ENCODE measurements at regions of chr1 and their contacts with region 1.

Region 1: GRCh38 chr1:110338886-110339406 is at the start of gene RBM15:
- DNase-seq: peak; percentile 100
- H3K4me3 ChIP-seq: peak within 1 kb of the TSS; percentile 67 to 95 (median 77)
- H3K27ac ChIP-seq: peak within 1 kb of the TSS; percentile 95 to 98 (median 97)
- H3K4me1 ChIP-seq: peaks cover 0 to 52% (median 52%) of the 10 kb centered on the region in 4 donors
- H3K27me3 ChIP-seq: no peaks in the 10 kb centered on the region
- CTCF ChIP-seq: no peak
- EP300 ChIP-seq: no peak
- POLR2A ChIP-seq: no peak
- total RNA-seq, gene RBM15: 23.2 to 32.1 (median 25.5) TPM

Region 2: DNA sequence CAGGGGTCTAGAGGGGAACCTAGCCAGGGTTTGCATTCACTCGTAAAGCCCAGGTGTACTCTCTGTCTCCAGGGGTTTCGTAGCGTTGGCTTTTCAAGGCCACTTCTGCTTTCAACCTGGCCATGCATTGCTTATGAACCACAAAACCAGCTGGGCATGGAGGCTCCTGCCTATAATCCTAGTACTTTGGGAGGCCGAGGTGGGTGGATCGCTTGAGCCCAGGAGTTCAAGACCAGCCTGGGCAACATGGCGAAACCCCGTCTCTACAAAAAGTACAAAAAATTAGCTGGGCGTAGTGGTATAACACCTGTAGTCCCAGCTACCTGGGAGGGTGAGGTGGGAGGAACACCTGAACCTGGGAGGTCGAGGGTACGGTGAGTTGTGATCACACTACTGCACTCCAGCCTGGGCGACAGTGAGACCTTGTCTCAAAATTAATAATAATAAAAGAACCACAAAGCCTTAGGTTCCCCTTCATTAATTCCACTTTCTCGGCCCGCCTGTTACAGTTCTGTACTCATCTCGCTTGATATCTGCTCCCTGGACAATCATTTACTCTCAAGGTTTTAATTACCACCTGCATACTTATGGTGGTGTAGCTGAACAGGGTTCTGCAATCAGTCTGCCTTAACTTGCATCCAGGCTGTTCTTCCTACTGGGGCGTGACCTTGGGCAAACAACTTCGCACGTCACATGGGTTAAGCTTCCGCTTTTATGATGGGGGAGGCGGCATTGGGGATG is 45.8 kb after region 1 on chr1:
- intact Hi-C with region 1: loop called (anchors 5 kb)
- DNase-seq: no peak
- H3K4me3 ChIP-seq: no peak overlapping the region
- H3K27ac ChIP-seq: no peak overlapping the region
- H3K4me1 ChIP-seq: peaks cover 0 to 3% (median 0%) of the 10 kb centered on the region in 4 donors
- H3K27me3 ChIP-seq: no peaks in the 10 kb centered on the region
- CTCF ChIP-seq: no peak
- EP300 ChIP-seq: no peak
- POLR2A ChIP-seq: no peak

Region 3: DNA sequence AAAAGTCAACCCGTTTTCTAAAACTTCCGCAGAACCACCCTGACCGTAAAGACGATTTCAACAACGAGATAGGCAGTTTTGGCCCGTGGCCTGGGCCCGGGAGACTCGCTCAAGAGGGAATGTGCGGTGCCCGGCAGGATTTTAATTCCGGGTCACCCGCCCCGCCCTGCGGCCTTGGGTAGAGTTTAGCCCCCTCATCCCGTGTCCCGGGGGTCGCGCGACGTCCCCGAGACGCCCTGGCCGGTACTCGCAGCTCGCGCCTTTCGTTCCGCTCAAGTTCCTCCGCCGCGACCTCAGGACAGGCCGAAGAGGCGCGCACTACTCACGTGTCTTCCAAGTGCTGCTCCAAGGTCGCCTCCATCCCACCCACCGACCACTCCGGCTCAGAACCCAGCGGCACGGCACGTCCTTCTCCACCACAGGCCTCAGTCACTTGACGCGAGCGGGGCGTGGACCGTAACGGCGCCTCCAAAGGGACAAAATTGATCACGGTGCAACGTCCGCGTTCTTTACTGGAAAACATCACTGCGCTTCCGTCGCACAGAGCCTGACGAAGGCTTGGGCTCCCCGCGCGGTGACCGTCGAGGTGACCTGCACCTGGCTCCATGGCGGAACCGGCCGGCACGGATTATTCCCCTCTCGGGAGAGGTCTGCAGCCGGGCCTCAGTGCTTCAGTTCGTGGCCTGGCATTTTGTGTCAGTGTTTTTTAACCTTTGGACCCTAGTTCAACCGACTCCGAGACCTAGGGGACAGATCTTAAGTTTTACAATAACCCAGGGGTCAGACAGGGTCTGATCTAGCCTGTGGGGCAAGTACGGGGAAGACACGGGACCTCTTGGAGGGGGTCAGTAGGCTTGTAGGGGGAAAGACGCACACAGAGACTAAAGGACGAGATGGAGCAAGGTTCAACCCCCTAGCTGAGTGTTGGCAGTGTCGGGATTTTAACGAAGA is 68.6 kb after region 1 on chr1 and contains the start of gene LAMTOR5:
- intact Hi-C with region 1: loop called (anchors 1 kb)
- DNase-seq: peak; percentile 97
- H3K4me3 ChIP-seq: peak within 1 kb of the TSS; percentile 77 to 99 (median 86)
- H3K27ac ChIP-seq: peak within 1 kb of the TSS; percentile 91 to 98 (median 93)
- H3K4me1 ChIP-seq: peaks cover 0 to 29% (median 17%) of the 10 kb centered on the region in 4 donors
- H3K27me3 ChIP-seq: no peaks in the 10 kb centered on the region
- CTCF ChIP-seq: peak in 1 of 4 experiments; percentile 11
- EP300 ChIP-seq: peak in 2 of 4 donors; percentile 35 to 66
- POLR2A ChIP-seq: peak; percentile 71 to 92
- total RNA-seq, gene LAMTOR5: 61.2 to 117 (median 91.4) TPM

Measured in sigmoid colon (tissue), 7 donors.